MCF 10A (cell line): ENCODE measurements at regions of chr1 and their contacts with region 1.

Region 1: GRCh38 chr1:193729429-193729828 is 543.0 kb upstream of the B3GALT2 start:
- DNase-seq: peak; percentile 66
- H3K4me3 Mint-ChIP-seq: no peak overlapping the region
- H3K27ac Mint-ChIP-seq: peak overlapping the region; percentile 28
- H3K4me1 Mint-ChIP-seq: peaks cover 10% of the 10 kb centered on the region
- H3K27me3 Mint-ChIP-seq: no peaks in the 10 kb centered on the region
- CTCF ChIP-seq: no peak

Region 2: GRCh38 chr1:193504920-193505319 is 224.5 kb before region 1 on chr1:
- CTCF ChIA-PET with region 1: no interaction called
- POLR2A ChIA-PET with region 1: no interaction called
- intact Hi-C with region 1: no loop called
- DNase-seq: no peak
- H3K4me3 Mint-ChIP-seq: no peak overlapping the region
- H3K27ac Mint-ChIP-seq: no peak overlapping the region
- H3K4me1 Mint-ChIP-seq: no peaks in the 10 kb centered on the region
- H3K27me3 Mint-ChIP-seq: no peaks in the 10 kb centered on the region
- CTCF ChIP-seq: no peak

Region 3: DNA sequence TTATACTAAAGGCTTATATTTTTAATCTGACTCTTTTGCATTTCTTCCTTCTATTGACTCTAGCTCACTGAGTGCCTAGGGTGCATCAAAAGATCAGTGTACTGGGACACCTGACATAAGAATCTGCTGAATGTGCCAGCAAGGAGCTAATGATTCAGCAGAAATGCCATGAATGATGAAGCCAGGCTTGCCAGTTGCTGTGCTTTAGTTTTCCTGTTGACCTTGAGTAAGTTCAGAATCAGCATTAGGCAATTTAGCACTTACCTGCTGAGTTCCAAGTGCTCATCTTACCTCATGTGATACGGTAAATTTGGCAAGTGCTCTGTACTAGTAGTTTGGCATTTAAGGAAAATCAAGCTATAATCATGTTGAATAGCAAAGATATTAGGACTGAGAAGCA is 19.8 kb before region 1 on chr1:
- CTCF ChIA-PET with region 1: interaction called, 5 read pairs
- POLR2A ChIA-PET with region 1: interaction called, 17 read pairs
- intact Hi-C with region 1: no loop called
- DNase-seq: peak; percentile 75
- H3K4me3 Mint-ChIP-seq: no peak overlapping the region
- H3K27ac Mint-ChIP-seq: peak overlapping the region; percentile 42
- H3K4me1 Mint-ChIP-seq: peaks cover 30% of the 10 kb centered on the region
- H3K27me3 Mint-ChIP-seq: no peaks in the 10 kb centered on the region
- CTCF ChIP-seq: no peak

Region 4: GRCh38 chr1:193891788-193892187 is 162.4 kb after region 1 on chr1:
- CTCF ChIA-PET with region 1: no interaction called
- POLR2A ChIA-PET with region 1: no interaction called
- intact Hi-C with region 1: no loop called
- DNase-seq: no peak
- H3K4me3 Mint-ChIP-seq: no peak overlapping the region
- H3K27ac Mint-ChIP-seq: no peak overlapping the region
- H3K4me1 Mint-ChIP-seq: no peaks in the 10 kb centered on the region
- H3K27me3 Mint-ChIP-seq: no peaks in the 10 kb centered on the region
- CTCF ChIP-seq: no peak